Dendritic cell treated with granulocyte-macrophage colony-stimulating factor and Interleukin-4, amounts not matched to agents 40 ng/mL and 50 ng/mL, for 4 days (primary cell): ENCODE measurements at regions of chr13 and their contacts with region 1.

Region 1: DNA sequence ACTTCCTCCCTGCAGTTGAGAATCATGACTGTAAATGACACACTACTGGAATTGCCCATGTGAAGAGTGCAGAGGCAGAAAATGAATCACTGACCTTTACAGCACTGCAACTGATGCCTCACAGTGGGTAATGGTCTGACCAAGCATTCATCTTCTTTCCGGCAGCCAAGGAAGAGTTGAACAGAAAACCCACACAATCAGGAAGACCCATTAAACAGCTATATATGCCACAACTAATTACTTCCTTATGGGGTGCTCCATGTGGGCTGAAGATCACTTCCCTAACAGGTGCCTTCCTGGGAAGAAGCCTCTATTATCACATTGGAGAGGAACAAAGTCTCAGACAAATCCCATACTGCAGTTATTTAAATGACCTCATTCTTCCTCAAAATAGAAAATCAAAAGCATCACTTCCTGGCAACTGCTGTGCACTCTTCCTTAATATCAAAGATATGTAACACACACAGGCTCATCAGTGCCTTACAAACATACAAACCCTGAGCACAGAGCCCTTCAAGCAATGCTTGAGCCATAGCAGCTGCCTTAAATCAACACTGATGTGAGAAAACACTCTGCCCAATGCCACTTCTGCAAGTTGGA is 45.8 kb downstream of the RUBCNL start:
- H3K4me3 Mint-ChIP-seq: peak overlapping the region; percentile 45
- H3K27ac Mint-ChIP-seq: peak overlapping the region; percentile 95
- H3K4me1 Mint-ChIP-seq: peaks cover 70% of the 10 kb centered on the region
- H3K27me3 Mint-ChIP-seq: peaks cover under 1% of the 10 kb centered on the region

Region 2: DNA sequence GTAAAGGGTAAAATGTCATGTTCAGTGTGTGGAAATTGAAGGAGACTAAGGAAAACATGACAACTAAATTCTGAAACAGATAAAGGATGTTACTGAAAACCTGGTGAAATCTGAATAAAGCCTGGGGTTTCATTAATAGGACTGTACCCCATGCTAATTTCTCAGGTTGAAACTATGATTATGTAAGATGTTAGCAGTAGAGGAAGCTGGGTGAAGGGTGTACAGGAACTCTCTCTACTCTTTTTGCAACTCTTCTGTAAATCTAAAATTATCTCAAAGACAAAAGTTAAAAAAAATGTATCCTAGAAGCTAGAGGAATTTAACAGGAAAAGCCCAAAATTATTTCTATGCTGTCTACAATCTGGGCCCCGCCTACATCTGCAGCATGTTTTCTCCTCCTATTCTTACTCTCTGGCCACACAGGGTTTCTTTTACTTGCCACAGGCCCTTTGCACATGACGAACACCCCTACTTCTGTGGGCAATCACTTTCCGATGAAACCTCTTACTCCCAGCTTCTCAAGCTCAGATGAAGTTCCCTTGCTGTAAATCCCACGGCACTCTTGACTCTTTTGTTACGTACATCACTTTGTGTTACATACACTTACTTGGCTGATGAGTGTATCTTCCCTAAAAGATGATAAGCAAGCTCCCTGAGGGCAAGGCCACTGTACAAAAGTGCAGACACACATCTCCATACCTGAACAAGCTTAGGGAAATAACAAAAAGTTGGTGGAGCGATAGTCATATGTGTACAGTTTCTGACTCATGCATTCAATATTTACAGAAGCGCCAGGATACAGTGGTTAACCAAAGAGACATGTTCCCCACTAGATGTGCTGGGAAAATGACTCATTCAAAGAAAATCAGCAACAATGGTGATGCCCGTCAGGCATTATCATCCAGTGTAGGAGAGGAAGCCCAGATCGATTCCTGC is 13.2 kb after region 1 on chr13:
- intact Hi-C with region 1: loop called (anchors 1 kb)
- H3K4me3 Mint-ChIP-seq: no peak overlapping the region
- H3K27ac Mint-ChIP-seq: peak overlapping the region; percentile 87
- H3K4me1 Mint-ChIP-seq: peaks cover 45% of the 10 kb centered on the region
- H3K27me3 Mint-ChIP-seq: no peaks in the 10 kb centered on the region

Region 3: GRCh38 chr13:46378411-46378810 is 37.2 kb after region 1 on chr13:
- intact Hi-C with region 1: loop called (anchors 2 kb)
- H3K4me3 Mint-ChIP-seq: no peak overlapping the region
- H3K27ac Mint-ChIP-seq: peak overlapping the region; percentile 13
- H3K4me1 Mint-ChIP-seq: peaks cover 55% of the 10 kb centered on the region
- H3K27me3 Mint-ChIP-seq: no peaks in the 10 kb centered on the region

Region 4: GRCh38 chr13:46403851-46404732 is 62.9 kb after region 1 on chr13:
- intact Hi-C with region 1: loop called (anchors 5 kb)
- H3K4me3 Mint-ChIP-seq: peak overlapping the region; percentile 18
- H3K27ac Mint-ChIP-seq: peak overlapping the region; percentile 87
- H3K4me1 Mint-ChIP-seq: peaks cover 57% of the 10 kb centered on the region
- H3K27me3 Mint-ChIP-seq: no peaks in the 10 kb centered on the region

Region 5: DNA sequence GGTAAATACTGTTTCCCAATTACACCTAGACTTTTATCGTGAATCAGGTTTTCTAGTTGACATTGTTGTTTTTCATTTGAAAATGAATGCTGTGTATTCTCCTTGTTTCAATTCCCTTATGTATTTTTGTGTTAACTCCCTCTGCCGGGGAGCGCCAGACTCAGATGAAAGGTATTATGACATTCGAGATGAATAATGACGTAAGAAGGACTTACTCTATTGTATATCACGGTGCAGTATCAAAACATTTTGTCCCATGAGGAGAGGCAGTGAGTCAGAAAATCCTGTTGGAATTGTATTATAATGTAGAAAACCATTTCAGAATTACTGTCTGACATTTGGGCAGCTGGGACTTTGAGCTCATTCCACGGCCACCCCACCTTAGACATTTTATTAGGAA is 273.4 kb after region 1 on chr13:
- intact Hi-C with region 1: no loop called
- H3K4me3 Mint-ChIP-seq: no peak overlapping the region
- H3K27ac Mint-ChIP-seq: no peak overlapping the region
- H3K4me1 Mint-ChIP-seq: peaks cover 37% of the 10 kb centered on the region
- H3K27me3 Mint-ChIP-seq: no peaks in the 10 kb centered on the region